ENCODE measurements at regions of chr22 and their contacts with region 1.

Region 1: GRCh38 chr22:37896181-37896592 is 9.9 kb upstream of the MICALL1 start:
- DNase-seq: peak in 1 of 5 donors; percentile 29
- ATAC-seq: peak in 3 of 4 donors; percentile 6 to 75 (median 10)
- H3K4me3 ChIP-seq: no peak overlapping the region
- H3K27ac ChIP-seq: peak overlapping the region in 11 of 12 donors; percentile 4 to 83 (median 61)
- H3K4me1 ChIP-seq: peaks cover 0 to 36% (median 17%) of the 10 kb centered on the region in 12 donors
- H3K27me3 ChIP-seq: no peaks in the 10 kb centered on the region
- CTCF ChIP-seq: no peak
- POLR2A ChIP-seq: no peak

Region 2: DNA sequence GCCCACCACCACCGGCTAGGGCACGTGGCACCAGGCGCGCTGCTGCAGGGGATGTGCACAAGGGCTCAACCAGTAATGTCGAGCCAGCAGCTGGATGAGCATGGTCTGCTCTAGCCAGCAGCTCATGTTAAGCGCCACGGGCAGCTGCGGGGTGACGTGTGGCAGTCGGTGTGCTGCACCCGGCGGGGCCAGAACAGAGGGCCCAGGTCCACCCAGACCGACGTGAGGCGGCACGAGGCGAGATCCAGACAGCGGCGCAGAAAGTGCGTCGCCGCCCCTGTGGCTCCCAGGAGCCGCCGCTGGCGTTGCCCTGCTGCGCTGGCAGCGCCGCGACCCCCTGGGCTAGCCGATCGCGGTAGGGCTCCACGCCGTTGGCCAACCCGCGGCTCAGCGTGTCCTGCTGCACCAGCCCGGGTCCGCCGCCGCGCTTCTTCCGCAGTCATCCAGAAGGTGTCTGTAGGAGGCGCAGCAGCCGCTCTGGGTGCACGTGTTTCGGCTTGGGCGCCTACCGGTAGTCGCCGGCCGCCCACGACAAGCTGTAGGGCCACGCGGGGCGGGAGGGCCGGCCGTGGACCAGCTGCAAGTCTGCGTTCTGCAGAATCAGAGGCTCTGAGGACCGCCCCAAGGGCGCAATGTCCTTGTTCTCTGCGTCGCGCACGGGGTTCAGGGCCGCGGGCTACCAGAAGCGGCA is 77.6 kb before region 1 on chr22:
- intact Hi-C with region 1: no loop called
- DNase-seq: peak; percentile 58 to 87 (median 71)
- ATAC-seq: peak in 3 of 4 donors; percentile 38 to 61 (median 53)
- H3K4me3 ChIP-seq: peak overlapping the region; percentile 14 to 62 (median 46)
- H3K27ac ChIP-seq: peak overlapping the region in 3 of 12 donors; percentile 9 to 84 (median 70)
- H3K4me1 ChIP-seq: peaks cover 2 to 20% (median 18%) of the 10 kb centered on the region in 12 donors
- H3K27me3 ChIP-seq: peaks cover 0 to 25% (median 5%) of the 10 kb centered on the region in 9 donors
- CTCF ChIP-seq: peak in 7 of 12 donors; percentile 23 to 55 (median 38)
- POLR2A ChIP-seq: no peak

Region 3: DNA sequence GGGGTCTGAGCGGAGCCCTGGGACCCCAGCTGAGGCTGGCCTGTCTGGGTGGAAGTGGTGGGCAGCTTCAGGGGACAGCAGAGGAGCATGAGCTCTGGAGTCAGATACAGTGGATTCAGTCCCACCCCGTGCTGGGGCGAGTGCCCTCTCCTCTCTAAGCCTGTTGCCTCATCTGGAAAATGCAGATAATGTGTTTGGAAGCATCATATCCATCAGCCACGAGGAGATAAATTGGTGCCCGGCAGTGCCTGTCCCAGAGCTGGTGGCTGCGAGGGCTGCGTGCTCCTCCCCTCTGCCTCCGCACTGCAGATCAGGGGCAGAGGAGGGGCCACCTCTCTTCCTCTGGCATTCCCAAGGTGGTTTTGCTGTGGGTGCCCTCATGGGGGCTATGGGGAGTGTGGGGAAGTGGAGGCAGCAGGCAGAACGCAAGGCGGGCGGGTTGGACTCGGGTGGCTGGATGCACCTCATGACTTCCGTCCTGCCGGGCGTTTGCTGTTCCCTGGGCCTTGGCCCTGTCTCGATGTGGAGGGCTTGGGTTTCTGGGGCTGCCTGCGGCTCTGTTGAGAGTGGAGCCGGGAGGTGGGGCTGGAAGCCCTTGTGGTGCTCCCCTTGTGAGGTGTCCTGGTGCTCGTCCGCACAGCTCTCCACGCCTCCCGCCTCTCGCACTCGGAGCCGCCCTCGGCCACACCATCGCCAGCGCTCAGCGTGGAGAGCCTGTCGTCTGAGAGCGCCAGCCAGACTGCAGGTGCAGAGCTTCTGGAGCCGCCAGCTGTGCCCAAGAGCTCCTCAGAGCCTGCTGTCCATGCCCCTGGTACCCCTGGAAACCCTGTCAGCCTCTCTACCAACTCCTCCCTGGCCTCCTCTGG is 30.8 kb after region 1 on chr22:
- intact Hi-C with region 1: loop called in 5 of 10 experiments (anchors 1 to 5 kb)
- DNase-seq: peak in 1 of 5 donors; percentile 51
- ATAC-seq: no peak
- H3K4me3 ChIP-seq: no peak overlapping the region
- H3K27ac ChIP-seq: peak overlapping the region in 1 of 12 donors; percentile 56
- H3K4me1 ChIP-seq: peaks cover 0 to 11% (median 0%) of the 10 kb centered on the region in 12 donors
- H3K27me3 ChIP-seq: no peaks in the 10 kb centered on the region
- CTCF ChIP-seq: no peak
- POLR2A ChIP-seq: no peak

Region 4: GRCh38 chr22:37933711-37934376 is 37.7 kb after region 1 on chr22:
- intact Hi-C with region 1: loop called in 4 of 10 experiments (anchors 5 kb)
- DNase-seq: peak; percentile 87 to 94 (median 92)
- ATAC-seq: peak; percentile 93 to 98 (median 96)
- H3K4me3 ChIP-seq: no peak overlapping the region
- H3K27ac ChIP-seq: peak overlapping the region in 11 of 12 donors; percentile 16 to 80 (median 60)
- H3K4me1 ChIP-seq: peaks cover 6 to 40% (median 14%) of the 10 kb centered on the region in 12 donors
- H3K27me3 ChIP-seq: no peaks in the 10 kb centered on the region
- CTCF ChIP-seq: peak; percentile 88 to 99 (median 95)
- POLR2A ChIP-seq: no peak

Region 5: DNA sequence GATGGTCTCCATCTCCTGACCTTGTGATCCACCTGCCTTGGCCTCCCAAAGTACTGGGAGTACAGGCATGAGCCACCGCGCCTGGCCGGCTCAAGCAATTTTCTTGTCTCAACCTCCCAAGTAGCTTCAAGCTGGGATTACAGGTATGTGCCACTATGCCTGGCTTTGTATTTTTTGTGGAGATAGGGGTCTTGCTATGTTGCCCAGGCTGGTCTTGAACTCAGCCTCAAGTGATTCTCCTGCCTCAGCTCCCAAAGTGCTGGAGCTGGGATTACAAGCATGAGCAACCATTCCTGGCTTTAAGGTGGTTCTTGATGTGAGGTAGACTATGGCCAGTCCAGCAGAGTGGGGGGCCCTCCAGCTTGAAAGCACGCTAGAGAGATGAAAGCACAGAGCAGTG is 64.9 kb after region 1 on chr22:
- intact Hi-C with region 1: loop called in 1 of 10 experiments (anchors 5 kb)
- DNase-seq: no peak
- ATAC-seq: no peak
- H3K4me3 ChIP-seq: no peak overlapping the region
- H3K27ac ChIP-seq: no peak overlapping the region
- H3K4me1 ChIP-seq: peaks cover 0 to 16% (median 8%) of the 10 kb centered on the region in 12 donors
- H3K27me3 ChIP-seq: no peaks in the 10 kb centered on the region
- CTCF ChIP-seq: no peak
- POLR2A ChIP-seq: no peak

Region 6: GRCh38 chr22:38034274-38034882 is 138.2 kb after region 1 on chr22:
- intact Hi-C with region 1: no loop called
- DNase-seq: peak; percentile 70 to 86 (median 78)
- ATAC-seq: peak; percentile 38 to 86 (median 66)
- H3K4me3 ChIP-seq: no peak overlapping the region
- H3K27ac ChIP-seq: peak overlapping the region; percentile 23 to 80 (median 60)
- H3K4me1 ChIP-seq: peaks cover 0 to 26% (median 14%) of the 10 kb centered on the region in 12 donors
- H3K27me3 ChIP-seq: no peaks in the 10 kb centered on the region
- CTCF ChIP-seq: no peak
- POLR2A ChIP-seq: no peak

Region 7: GRCh38 chr22:38135133-38135751 is 239.1 kb after region 1 on chr22:
- intact Hi-C with region 1: no loop called
- DNase-seq: no peak
- ATAC-seq: no peak
- H3K4me3 ChIP-seq: no peak overlapping the region
- H3K27ac ChIP-seq: no peak overlapping the region
- H3K4me1 ChIP-seq: peaks cover 0 to 14% (median 2%) of the 10 kb centered on the region in 12 donors
- H3K27me3 ChIP-seq: no peaks in the 10 kb centered on the region
- CTCF ChIP-seq: no peak
- POLR2A ChIP-seq: no peak

Measured in heart left ventricle (tissue), 16 donors.